Prostate gland (tissue), 2 donors: ENCODE measurements at regions of chr4 and their contacts with region 1.

Region 1: GRCh38 chr4:183840311-183840710 is 64.8 kb upstream of the STOX2 start:
- DNase-seq: peak; percentile 77
- H3K4me3 ChIP-seq: no peak overlapping the region
- H3K27ac ChIP-seq: no peak overlapping the region
- H3K4me1 ChIP-seq: no peaks in the 10 kb centered on the region
- H3K27me3 ChIP-seq: no peaks in the 10 kb centered on the region
- CTCF ChIP-seq: peak; percentile 77 to 91 (median 90)
- POLR2A ChIP-seq: no peak

Region 2: DNA sequence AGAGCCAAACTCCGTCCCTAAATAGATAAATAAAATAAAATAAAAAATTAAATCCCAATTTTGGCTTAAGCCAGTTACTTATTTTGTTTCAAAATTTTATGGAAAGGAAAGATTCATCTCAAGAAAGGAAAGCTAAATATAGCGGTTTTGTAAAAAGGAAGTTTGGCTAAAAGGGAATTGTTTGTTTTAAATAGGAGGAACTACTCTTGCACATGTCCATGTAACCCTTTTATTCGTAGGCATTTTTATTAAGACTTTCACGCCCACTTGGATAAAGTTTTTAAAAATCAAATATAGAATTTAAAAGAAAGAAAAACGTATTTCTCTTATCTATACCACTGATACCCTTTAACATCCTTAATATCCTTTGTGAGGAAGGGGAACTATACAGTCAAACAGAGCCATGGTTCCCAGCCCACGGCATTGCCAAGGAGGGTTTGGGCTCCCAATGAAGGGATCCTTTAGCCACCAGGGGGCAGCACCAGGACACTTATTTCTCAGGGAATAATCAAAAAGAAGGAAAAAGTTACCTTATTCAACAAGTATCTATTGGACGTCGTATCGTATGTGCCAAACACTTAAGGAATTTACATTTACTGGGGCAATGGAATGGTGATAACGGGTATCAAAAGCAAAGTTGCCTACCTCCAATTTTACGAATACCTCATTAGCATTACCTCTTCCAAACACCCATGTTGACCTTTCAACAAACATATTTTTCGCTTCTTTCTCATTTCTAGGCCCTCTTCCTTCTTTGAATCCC is 368.2 kb before region 1 on chr4:
- intact Hi-C with region 1: loop called (anchors 10 kb)
- DNase-seq: peak; percentile 77
- H3K4me3 ChIP-seq: no peak overlapping the region
- H3K27ac ChIP-seq: no peak overlapping the region
- H3K4me1 ChIP-seq: no peaks in the 10 kb centered on the region
- H3K27me3 ChIP-seq: no peaks in the 10 kb centered on the region
- CTCF ChIP-seq: peak; percentile 72 to 94 (median 79)
- POLR2A ChIP-seq: no peak

Region 3: DNA sequence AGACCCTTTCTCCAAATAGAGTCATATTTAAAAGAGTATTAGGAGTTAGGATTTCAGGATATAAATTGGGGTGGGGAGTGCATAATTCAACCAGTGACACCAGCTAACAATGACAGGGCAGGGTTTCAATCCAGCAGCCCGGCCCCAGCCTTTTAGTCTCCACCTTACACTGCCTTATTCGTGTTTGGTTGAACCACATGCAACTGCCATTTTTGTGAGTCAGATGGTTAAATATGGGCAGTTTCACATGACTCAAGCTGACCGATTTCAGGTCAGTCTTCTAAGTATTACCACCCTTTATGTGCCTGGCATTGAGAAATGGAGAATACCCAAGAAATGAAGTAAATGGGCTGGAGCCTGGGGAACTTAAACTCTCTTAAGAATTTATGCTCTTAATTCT is 167.6 kb after region 1 on chr4:
- intact Hi-C with region 1: loop called (anchors 10 kb)
- DNase-seq: no peak
- H3K4me3 ChIP-seq: no peak overlapping the region
- H3K27ac ChIP-seq: no peak overlapping the region
- H3K4me1 ChIP-seq: no peaks in the 10 kb centered on the region
- H3K27me3 ChIP-seq: no peaks in the 10 kb centered on the region
- CTCF ChIP-seq: no peak
- POLR2A ChIP-seq: no peak

Region 4: DNA sequence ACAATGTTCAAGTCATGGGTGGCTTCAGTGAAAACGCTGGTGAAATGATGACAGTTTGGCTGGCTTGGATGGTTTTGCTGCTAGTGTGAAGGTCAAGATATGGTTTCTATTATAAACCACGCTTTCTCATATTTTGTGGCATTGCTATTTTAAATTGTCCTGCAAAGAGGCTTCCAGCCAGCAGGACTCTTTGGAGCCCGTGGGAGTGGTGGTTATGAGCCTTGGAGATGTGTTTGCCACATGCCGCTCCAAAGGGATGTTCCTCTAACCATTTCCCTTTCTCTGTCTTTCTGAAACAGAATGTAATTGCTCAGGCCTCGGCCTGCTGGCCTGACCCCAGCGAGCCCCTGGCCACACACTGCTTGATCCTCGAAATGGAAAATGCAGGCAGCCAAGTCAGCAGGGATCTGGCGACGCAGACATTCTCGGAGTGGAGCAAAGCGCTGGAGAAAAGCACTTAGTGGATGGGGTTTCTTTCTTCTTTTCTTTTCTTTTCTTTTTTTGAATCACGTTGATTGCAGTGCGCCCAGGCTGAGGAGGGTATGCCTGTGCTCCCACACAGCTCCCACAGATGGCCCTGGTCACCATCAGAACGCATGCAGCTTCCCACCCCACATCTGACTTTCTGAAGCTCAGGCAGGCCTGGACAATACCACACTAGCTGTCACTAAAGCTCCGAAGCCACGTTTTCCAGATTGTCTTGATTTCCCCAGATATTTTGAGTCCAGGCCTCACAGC is 263.4 kb after region 1 on chr4:
- intact Hi-C with region 1: loop called (anchors 2 kb)
- DNase-seq: no peak
- H3K4me3 ChIP-seq: no peak overlapping the region
- H3K27ac ChIP-seq: no peak overlapping the region
- H3K4me1 ChIP-seq: no peaks in the 10 kb centered on the region
- H3K27me3 ChIP-seq: no peaks in the 10 kb centered on the region
- CTCF ChIP-seq: no peak
- POLR2A ChIP-seq: no peak

Region 5: DNA sequence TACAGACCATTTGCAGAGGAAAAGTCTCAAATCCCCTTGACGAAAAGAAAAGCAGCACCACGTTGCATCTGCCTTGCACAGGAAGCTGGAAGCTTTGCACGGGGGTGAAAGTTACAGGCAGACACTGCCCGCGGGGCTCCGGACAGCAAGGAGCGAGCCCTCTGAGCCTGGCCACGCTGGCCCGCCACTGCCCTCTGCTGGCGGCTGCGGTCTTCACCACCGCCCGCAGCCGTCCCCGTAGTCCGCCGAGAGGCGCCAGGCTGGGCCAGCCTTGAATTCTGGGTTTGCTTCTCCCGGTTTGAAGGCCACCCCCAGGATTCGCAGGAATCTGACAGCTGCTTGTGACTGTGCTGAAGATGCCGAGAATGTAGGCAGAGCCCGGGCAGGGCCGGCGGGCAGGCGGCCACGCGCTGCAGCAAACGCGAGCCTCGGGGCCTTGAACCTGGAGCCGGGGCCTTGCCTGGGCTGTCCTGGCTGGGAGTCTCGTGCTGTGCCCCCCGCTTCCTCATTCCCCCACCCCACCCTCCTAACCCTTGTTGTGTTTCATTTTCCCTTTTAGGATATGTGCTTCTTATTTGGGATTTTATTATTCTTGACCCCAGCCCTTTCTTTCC is 328.2 kb after region 1 on chr4:
- intact Hi-C with region 1: loop called (anchors 1 kb)
- DNase-seq: peak; percentile 41
- H3K4me3 ChIP-seq: no peak overlapping the region
- H3K27ac ChIP-seq: no peak overlapping the region
- H3K4me1 ChIP-seq: no peaks in the 10 kb centered on the region
- H3K27me3 ChIP-seq: no peaks in the 10 kb centered on the region
- CTCF ChIP-seq: peak; percentile 72 to 90 (median 90)
- POLR2A ChIP-seq: no peak

Region 6: DNA sequence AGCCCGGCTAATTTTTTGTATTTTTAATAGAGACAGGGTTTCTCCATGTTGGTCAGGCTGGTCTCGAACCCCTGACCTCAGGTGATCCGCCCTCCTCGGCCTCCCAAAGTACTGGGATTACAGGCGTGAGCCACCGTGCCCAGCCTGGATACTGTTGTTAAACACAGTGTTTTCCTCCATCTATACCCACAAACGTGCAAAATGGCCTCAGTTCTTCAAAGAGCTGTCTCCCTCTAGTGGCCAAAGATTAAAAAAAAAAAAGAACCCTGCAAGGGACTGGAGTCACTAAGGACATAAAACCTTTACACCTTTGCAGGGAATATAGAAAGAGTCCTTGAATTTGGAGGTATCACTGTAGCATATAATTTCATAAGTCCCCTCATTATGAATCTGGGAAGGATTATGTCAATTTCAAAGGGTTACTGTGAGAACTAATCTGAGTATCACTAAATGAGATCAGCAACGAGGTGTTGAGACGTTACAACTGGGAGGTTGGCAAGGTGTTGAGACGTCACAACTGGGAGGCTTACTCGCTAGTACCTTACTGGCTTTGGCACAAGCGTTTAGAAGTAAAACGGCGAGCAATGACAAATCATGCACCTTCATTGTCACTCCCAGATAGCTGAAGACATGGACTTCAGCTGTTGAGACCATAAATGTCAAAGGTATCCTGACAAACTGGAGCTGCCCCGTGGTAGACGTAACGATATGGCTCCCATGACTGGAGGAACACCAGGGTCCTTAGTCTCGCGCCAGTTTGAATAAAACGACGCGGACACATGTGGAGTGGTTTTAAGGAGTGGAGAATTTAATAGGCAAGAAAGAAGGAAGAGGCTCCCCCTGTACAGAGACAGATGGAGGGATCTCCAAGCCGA is 410.7 kb after region 1 on chr4:
- intact Hi-C with region 1: loop called (anchors 5 kb)
- DNase-seq: no peak
- H3K4me3 ChIP-seq: no peak overlapping the region
- H3K27ac ChIP-seq: no peak overlapping the region
- H3K4me1 ChIP-seq: no peaks in the 10 kb centered on the region
- H3K27me3 ChIP-seq: no peaks in the 10 kb centered on the region
- CTCF ChIP-seq: peak; percentile 35 to 56 (median 50)
- POLR2A ChIP-seq: no peak